ENCODE measurements at regions of chr15 and their contacts with region 1.

Region 1: DNA sequence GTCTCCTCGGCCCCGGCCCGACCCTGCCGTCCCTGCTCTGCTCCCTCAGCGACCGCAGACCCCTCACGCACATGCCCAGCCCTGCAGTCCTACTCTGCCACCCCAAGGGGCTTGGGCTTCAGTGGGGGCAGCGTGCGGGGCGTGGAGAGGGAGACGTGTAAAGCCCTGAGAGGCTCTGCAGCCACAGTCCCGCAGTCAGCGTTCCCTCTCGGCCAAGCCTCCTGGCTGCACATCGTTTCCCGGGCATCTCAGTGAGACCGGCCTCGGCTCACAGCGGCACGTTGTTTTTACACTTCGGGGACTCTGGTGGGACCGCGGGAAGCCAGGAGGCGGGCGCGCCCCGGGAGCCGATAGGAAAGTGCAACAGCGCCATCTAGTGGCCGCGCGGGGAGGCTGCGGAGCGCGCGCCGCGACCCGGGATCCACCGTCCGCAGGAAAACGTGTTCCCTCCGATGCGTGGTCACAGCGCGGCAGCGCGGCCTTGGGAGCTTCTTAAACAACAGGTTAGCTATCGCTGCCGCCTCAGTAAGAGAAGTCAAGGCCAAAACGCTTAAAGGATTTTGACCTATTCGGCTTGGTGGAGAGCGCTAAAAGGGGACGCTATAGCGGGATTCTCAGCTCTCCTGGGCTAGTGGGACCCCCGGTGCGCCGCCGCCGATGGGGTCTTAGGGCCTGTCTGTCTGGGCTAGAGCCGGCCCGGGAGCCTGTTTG is 226.8 kb upstream of the IGF1R start:
- DNase-seq: peak in 9 of 10 donors; percentile 47 to 82 (median 66)
- H3K4me3 ChIP-seq: peak overlapping the region in 55 of 59 donors; percentile 2 to 63 (median 43)
- H3K27ac ChIP-seq: no peak overlapping the region
- H3K27me3 ChIP-seq: peaks cover 0 to 42% (median 15%) of the 10 kb centered on the region in 45 donors
- CTCF ChIP-seq: peak; percentile 89 to 100 (median 98)

Region 2: GRCh38 chr15:98311566-98312188 is 109.9 kb before region 1 on chr15:
- intact Hi-C with region 1: loop called (anchors 1 kb)
- DNase-seq: peak; percentile 30 to 85 (median 58)
- H3K4me3 ChIP-seq: peak overlapping the region in 1 of 59 donors; percentile 12
- H3K27ac ChIP-seq: no peak overlapping the region
- H3K27me3 ChIP-seq: peaks cover 0 to 16% (median 0%) of the 10 kb centered on the region in 45 donors
- CTCF ChIP-seq: peak; percentile 69 to 94 (median 83)